ENCODE measurements at regions of chr19 and their contacts with region 1.

Region 1: DNA sequence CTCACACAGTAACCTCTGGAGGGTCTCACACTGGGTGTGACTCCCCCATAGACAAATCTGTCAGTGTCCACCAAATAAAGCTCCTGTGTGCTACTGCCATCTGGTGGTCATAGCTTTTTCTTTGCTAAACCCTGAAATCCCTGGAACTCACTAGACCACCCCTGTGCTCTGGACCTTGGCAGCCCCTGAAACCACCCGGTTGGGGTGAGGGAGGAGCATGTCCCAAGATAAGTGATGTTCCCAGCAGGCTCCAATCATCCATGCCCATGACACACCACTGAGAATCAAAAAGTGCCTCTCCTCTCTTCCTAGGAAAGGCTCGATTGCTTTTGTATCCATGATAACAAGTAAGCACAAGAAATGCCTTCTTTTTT is 6.5 kb upstream of the HSD17B14 start:
- DNase-seq: peak; percentile 42 to 60 (median 55)
- H3K4me3 ChIP-seq: no peak overlapping the region
- H3K4me3 Mint-ChIP-seq: peak overlapping the region in 1 of 8 donors; percentile 33
- H3K27ac ChIP-seq: no peak overlapping the region
- H3K27ac Mint-ChIP-seq: no peak overlapping the region
- H3K4me1 ChIP-seq: no peaks in the 10 kb centered on the region
- H3K4me1 Mint-ChIP-seq: peaks cover 0 to 4% (median 2%) of the 10 kb centered on the region in 4 donors
- H3K27me3 ChIP-seq: no peaks in the 10 kb centered on the region
- H3K27me3 Mint-ChIP-seq: no peaks in the 10 kb centered on the region

Region 2: DNA sequence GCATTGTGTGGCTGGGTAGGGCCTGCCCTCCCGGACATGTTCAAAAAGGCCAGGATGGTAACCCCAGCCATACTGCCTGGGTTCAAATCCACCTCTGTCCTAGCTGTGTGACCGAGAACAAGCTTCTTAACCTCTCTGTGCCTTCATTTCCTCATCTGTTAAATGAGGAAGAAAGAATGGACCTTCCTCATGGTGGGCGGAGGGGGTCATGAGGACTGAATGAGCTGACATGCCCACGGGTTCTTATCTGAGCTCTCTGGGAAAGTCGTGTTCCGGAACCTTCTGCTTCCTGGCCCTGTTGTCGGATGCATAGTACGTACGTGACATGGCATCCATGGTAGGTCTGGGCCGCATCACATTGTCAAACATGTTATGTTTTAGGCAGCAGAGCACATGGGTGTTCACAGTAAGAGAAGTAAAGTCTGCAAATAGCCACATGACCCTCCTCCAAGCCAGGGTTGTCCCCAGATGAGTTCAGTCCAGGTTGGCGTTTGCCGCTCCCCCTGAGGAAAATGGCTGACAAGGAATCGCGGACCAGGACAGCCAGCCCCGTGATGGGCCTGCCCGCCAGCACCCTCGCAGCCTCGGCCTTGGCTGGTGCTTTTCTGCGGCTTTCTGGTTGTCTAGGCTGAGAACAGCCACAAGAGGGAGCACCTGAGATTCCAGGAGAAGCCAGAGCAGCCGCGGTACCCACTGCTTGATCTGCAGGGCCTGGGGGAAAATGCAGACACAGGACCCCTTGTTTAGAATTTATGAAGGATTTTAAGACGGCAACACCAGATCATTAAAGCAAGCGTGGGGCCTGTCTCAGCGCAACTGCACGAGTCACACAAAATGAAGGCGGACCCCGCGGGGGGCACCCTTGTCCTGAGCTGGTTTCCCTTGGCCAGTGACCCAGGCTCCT is 167.6 kb before region 1 on chr19:
- CTCF ChIA-PET with region 1: interaction called, 8 read pairs
- POLR2A ChIA-PET with region 1: no interaction called
- intact Hi-C with region 1: loop called (anchors 1 kb)
- DNase-seq: peak; percentile 72 to 80 (median 75)
- H3K4me3 ChIP-seq: no peak overlapping the region
- H3K4me3 Mint-ChIP-seq: peak overlapping the region in 1 of 8 donors; percentile 2
- H3K27ac ChIP-seq: no peak overlapping the region
- H3K27ac Mint-ChIP-seq: peak overlapping the region in 3 of 7 donors; percentile 23 to 86 (median 64)
- H3K4me1 ChIP-seq: peaks cover 9% of the 10 kb centered on the region
- H3K4me1 Mint-ChIP-seq: peaks cover 5 to 8% (median 6%) of the 10 kb centered on the region in 4 donors
- H3K27me3 ChIP-seq: no peaks in the 10 kb centered on the region
- H3K27me3 Mint-ChIP-seq: no peaks in the 10 kb centered on the region

Region 3: DNA sequence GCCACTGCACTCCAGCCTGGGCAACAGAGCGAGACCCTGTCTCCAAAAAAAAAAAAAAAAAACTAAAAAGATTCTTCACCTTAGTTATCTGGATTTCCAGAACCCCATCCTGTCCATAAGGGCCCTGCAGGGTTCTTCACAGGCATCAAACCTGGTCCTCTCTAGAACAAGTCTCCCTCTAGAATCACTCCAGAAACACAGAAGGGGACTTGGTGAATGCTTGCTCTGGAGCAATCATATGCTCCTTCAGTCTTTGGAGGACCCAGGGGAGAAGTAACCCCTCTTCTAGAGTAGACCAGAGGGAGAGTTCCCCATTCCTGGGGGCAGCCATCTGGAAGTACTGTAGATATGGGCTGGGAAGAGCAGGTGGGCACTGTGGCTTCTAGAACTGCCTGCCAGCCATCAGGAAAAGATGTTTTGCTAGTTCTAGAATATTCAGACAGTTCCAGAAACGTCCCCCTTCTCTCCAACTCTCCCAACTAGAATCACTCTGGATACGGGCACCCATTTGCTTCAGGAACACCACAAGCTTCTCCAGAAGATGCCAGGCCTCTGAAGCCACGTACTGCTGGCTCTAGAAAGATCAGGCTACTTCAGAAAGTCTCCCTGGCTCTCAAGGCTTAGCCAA is 93.1 kb before region 1 on chr19:
- CTCF ChIA-PET with region 1: no interaction called
- POLR2A ChIA-PET with region 1: no interaction called
- intact Hi-C with region 1: no loop called
- DNase-seq: peak in 1 of 5 donors; percentile 27
- H3K4me3 ChIP-seq: no peak overlapping the region
- H3K4me3 Mint-ChIP-seq: no peak overlapping the region
- H3K27ac ChIP-seq: no peak overlapping the region
- H3K27ac Mint-ChIP-seq: no peak overlapping the region
- H3K4me1 ChIP-seq: peaks cover 28% of the 10 kb centered on the region
- H3K4me1 Mint-ChIP-seq: peaks cover 15 to 37% (median 25%) of the 10 kb centered on the region in 4 donors
- H3K27me3 ChIP-seq: peaks cover 5% of the 10 kb centered on the region
- H3K27me3 Mint-ChIP-seq: peaks cover 8 to 11% of the 10 kb centered on the region in 2 donors

Region 4: GRCh38 chr19:48830088-48830487 is 12.7 kb before region 1 on chr19:
- CTCF ChIA-PET with region 1: interaction called, 10 read pairs
- POLR2A ChIA-PET with region 1: interaction called, 4 read pairs
- intact Hi-C with region 1: no loop called
- DNase-seq: no peak
- H3K4me3 ChIP-seq: no peak overlapping the region
- H3K4me3 Mint-ChIP-seq: no peak overlapping the region
- H3K27ac ChIP-seq: no peak overlapping the region
- H3K27ac Mint-ChIP-seq: no peak overlapping the region
- H3K4me1 ChIP-seq: no peaks in the 10 kb centered on the region
- H3K4me1 Mint-ChIP-seq: peaks cover 0 to 5% (median 0%) of the 10 kb centered on the region in 4 donors
- H3K27me3 ChIP-seq: no peaks in the 10 kb centered on the region
- H3K27me3 Mint-ChIP-seq: peaks cover 0 to 3% of the 10 kb centered on the region in 2 donors

Region 5: DNA sequence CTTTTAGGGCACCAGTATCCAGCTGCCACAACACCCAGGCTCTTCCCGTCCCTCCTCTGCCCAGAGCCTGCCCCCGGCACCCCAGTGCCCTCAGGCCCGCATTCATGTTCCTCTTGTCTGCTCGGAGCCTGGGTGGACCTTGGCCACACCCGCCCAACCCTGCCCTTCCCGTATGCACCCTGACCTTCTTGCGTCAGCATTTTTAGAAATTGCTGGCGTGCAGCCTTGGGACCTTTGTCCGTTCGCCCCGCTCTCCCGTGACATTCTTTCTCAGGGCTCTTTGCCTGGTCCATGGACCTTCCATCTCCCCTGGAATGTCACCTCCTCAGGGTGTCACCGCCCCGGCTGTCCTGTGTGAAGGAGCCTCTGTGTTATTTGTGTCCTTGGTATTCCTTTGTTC is 64.9 kb after region 1 on chr19:
- CTCF ChIA-PET with region 1: no interaction called
- POLR2A ChIA-PET with region 1: no interaction called
- intact Hi-C with region 1: no loop called
- DNase-seq: no peak
- H3K4me3 ChIP-seq: no peak overlapping the region
- H3K4me3 Mint-ChIP-seq: no peak overlapping the region
- H3K27ac ChIP-seq: no peak overlapping the region
- H3K27ac Mint-ChIP-seq: peak overlapping the region in 1 of 7 donors; percentile 25
- H3K4me1 ChIP-seq: peaks cover under 1% of the 10 kb centered on the region
- H3K4me1 Mint-ChIP-seq: peaks cover 0 to 4% (median under 1%) of the 10 kb centered on the region in 4 donors
- H3K27me3 ChIP-seq: no peaks in the 10 kb centered on the region
- H3K27me3 Mint-ChIP-seq: no peaks in the 10 kb centered on the region

Region 6: DNA sequence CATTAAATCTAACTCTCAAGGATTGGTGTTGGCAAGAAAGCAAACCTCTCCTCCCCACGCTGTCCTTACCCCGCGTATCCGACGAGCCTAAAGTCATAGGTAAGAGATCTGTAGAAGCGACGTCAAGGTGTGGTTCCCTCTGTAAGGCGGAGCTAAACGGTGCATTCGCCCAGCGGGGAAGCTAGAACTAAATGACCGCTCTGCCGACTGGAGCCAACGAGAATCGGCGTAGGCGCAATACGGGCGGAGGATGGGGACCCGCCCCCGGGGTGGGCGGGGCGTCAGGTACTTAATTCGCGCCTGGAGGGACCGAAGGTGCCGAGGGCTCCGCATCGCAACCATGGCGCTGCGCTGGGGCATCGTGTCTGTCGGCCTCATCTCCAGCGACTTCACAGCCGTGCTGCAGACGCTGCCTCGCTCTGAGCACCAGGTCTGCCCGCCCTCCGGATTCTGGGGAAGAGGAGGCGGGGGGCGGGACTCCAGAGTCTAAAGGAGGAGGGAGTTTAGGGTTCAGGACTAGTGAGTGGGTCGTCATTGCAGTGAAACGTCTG is 90.7 kb after region 1 on chr19 and contains the start of gene DHDH:
- CTCF ChIA-PET with region 1: interaction called, 12 read pairs
- POLR2A ChIA-PET with region 1: no interaction called
- intact Hi-C with region 1: no loop called
- DNase-seq: peak; percentile 86 to 92 (median 87)
- H3K4me3 ChIP-seq: peak within 1 kb of the TSS; percentile 39 to 54
- H3K4me3 Mint-ChIP-seq: peak within 1 kb of the TSS; percentile 77 to 92 (median 88)
- H3K27ac ChIP-seq: peak within 1 kb of the TSS; percentile 23
- H3K27ac Mint-ChIP-seq: peak within 1 kb of the TSS in 6 of 7 donors; percentile 49 to 93 (median 90)
- H3K4me1 ChIP-seq: peaks cover 6% of the 10 kb centered on the region
- H3K4me1 Mint-ChIP-seq: peaks cover 5 to 17% (median 11%) of the 10 kb centered on the region in 4 donors
- H3K27me3 ChIP-seq: no peaks in the 10 kb centered on the region
- H3K27me3 Mint-ChIP-seq: no peaks in the 10 kb centered on the region
- total RNA-seq, gene DHDH: 1.2 to 1.6 TPM

Region 7: GRCh38 chr19:48970923-48971395 is 128.2 kb after region 1 on chr19:
- CTCF ChIA-PET with region 1: interaction called, 50 read pairs
- POLR2A ChIA-PET with region 1: interaction called, 11 read pairs
- intact Hi-C with region 1: no loop called
- DNase-seq: peak; percentile 67 to 77 (median 68)
- H3K4me3 ChIP-seq: no peak overlapping the region
- H3K4me3 Mint-ChIP-seq: peak overlapping the region in 1 of 8 donors; percentile 6
- H3K27ac ChIP-seq: no peak overlapping the region
- H3K27ac Mint-ChIP-seq: peak overlapping the region in 5 of 7 donors; percentile 27 to 80 (median 64)
- H3K4me1 ChIP-seq: peaks cover 19% of the 10 kb centered on the region
- H3K4me1 Mint-ChIP-seq: peaks cover 8 to 24% (median 17%) of the 10 kb centered on the region in 4 donors
- H3K27me3 ChIP-seq: no peaks in the 10 kb centered on the region
- H3K27me3 Mint-ChIP-seq: no peaks in the 10 kb centered on the region

Region 8: GRCh38 chr19:49949744-49950589 is 1107.2 kb after region 1 on chr19:
- CTCF ChIA-PET with region 1: no interaction called
- POLR2A ChIA-PET with region 1: no interaction called
- intact Hi-C with region 1: no loop called
- DNase-seq: no peak
- H3K4me3 ChIP-seq: no peak overlapping the region
- H3K4me3 Mint-ChIP-seq: no peak overlapping the region
- H3K27ac ChIP-seq: no peak overlapping the region
- H3K27ac Mint-ChIP-seq: no peak overlapping the region
- H3K4me1 ChIP-seq: no peaks in the 10 kb centered on the region
- H3K4me1 Mint-ChIP-seq: no peaks in the 10 kb centered on the region
- H3K27me3 ChIP-seq: no peaks in the 10 kb centered on the region
- H3K27me3 Mint-ChIP-seq: peaks cover 10 to 25% of the 10 kb centered on the region in 2 donors